Cardiac septum (tissue), 1 donor: ENCODE measurements at regions of chr12 and their contacts with region 1.

Region 1: GRCh38 chr12:100741084-100741711 is 53.4 kb upstream of the ANO4 start:
- DNase-seq: no peak

Region 2: GRCh38 chr12:100348657-100349454 is 392.3 kb before region 1 on chr12:
- intact Hi-C with region 1: loop called (anchors 5 kb)
- DNase-seq: no peak

Region 3: GRCh38 chr12:101209319-101210302 is 468.4 kb after region 1 on chr12 and contains the start of gene SLC5A8:
- intact Hi-C with region 1: no loop called
- DNase-seq: no peak
- total RNA-seq, gene SLC5A8: not detected